Activated B cell treated with CpG ODN at 0.5 μM for 24 hours (primary cell): ENCODE measurements at regions of chr20 and their contacts with region 1.

Region 1: DNA sequence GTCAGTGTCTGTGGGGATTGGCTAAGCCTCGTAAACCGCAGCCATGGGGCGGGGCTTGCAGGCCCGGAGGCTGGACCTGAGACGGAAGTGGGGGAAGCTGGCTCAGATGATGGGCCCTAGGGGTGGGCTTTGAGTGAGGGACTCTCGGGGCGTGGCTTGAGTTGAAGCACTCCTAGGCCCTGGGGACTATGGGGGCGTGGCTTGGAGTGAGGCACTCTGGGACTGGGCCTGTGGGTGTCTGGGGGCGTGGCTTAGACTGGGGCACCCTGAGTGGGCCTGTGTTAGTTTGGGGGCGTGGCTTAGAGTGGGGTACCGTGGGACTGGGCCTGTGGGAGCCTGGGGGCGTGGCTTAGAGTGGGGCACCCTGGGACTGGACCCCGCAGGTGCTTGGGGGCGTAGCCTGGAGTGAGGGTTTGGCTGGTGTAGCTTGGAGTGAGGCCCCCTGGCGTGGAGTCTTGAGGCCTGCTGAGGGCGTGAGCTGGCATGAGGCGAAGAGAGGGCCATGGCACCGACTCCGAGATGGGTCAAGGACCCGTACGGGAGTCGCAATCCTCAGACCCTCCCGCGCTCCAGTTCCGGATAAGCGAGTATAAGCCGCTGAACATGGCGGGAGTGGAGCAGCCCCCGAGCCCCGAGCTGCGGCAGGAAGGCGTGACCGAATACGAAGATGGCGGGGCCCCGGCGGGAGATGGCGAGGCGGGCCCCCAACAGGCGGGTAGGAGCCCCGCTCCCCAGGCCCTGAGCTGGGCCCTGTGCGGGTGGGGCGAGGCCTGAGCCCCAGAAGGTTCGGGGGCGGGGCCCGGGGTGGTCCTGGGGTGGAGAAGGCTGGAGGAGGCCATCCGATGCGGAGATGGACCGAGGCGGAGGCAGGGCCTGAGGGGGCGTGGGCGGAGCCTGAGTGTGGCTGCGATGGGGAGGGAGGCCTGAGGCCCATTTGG is 6.8 kb downstream of the L3MBTL1 start:
- DNase-seq: peak; percentile 83
- ATAC-seq: peak; percentile 89
- H3K4me3 Mint-ChIP-seq: peak overlapping the region; percentile 93
- H3K27ac Mint-ChIP-seq: peak overlapping the region; percentile 88
- H3K4me1 Mint-ChIP-seq: peaks cover 22% of the 10 kb centered on the region
- H3K27me3 Mint-ChIP-seq: peaks cover 11% of the 10 kb centered on the region
- CTCF ChIP-seq: no peak

Region 2: DNA sequence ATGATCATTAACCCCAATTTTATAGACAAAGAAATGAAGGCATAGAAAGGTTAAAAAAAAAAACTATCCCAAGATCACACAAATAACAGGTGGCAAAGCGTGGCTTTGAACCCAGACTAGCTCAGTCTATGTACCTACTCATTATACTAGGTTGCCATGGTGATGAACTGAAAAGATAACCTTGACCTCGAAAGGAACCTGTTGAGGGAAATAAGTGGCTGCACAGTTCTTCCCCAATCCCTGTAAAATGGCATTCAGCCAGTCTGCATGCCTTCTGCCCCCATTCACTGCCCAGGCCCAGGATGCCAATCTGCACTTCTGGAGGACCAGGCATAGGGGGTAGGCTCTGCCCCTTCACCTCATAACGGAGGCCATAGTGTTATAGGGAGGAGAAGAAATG is 619.9 kb before region 1 on chr20:
- CTCF ChIA-PET with region 1: no interaction called
- POLR2A ChIA-PET with region 1: no interaction called
- intact Hi-C with region 1: no loop called
- DNase-seq: no peak
- ATAC-seq: no peak
- H3K4me3 Mint-ChIP-seq: no peak overlapping the region
- H3K27ac Mint-ChIP-seq: no peak overlapping the region
- H3K4me1 Mint-ChIP-seq: no peaks in the 10 kb centered on the region
- H3K27me3 Mint-ChIP-seq: no peaks in the 10 kb centered on the region
- CTCF ChIP-seq: no peak

Region 3: DNA sequence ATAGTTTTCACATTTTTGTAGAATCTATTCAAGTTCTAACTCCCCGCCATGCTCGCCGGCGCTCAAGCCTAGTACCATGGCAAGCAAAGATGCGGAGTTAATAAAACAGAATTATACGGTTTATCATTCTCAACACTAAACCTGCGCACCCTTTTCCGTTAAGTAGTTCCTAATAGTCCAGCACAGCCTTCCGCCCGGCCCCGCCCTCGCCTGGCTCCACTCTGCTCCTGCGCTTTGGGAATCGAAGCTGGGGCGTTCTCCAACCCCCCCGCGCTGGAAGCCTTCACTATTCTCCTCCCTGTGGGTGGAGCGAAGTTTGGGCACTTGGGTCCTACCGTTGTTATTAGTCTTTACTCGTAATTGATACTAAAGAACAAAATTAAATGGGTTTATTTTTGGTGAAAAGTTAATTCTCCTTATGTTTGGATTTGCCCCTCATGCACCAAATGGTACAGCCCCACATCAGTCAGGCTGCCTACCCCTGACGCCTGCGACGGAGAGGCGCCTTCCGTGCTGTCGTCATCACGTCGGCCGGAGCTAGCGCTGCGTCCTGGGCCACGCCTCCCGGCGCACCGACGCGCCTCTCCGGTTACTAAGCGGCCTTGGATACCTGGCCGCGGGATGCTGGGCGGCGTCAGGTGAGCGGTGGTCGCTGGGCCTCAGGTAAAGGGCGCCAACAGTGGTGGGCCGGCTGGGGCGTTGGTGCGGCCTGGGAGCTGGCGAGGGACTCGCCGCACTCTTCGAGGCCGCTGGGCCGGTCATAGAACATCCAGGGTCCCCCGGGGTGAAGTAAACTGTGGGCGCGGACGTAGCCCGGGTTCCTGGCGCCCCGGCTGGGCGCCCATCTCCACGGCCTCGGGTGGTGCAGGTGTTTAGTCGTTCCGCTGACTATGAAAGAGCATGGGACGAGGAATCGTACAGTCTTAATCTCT is 76.3 kb after region 1 on chr20 and contains the start of gene IFT52:
- CTCF ChIA-PET with region 1: no interaction called
- POLR2A ChIA-PET with region 1: no interaction called
- intact Hi-C with region 1: loop called (anchors 1 kb)
- DNase-seq: peak; percentile 83
- ATAC-seq: peak; percentile 97
- H3K4me3 Mint-ChIP-seq: peak within 1 kb of the TSS; percentile 94
- H3K27ac Mint-ChIP-seq: peak within 1 kb of the TSS; percentile 95
- H3K4me1 Mint-ChIP-seq: peaks cover 17% of the 10 kb centered on the region
- H3K27me3 Mint-ChIP-seq: peaks cover 2% of the 10 kb centered on the region
- CTCF ChIP-seq: no peak
- total RNA-seq, gene IFT52: 18.7 and 20.8 TPM in 2 replicates